ENCODE measurements at regions of chr6 and their contacts with region 1.

Region 1: DNA sequence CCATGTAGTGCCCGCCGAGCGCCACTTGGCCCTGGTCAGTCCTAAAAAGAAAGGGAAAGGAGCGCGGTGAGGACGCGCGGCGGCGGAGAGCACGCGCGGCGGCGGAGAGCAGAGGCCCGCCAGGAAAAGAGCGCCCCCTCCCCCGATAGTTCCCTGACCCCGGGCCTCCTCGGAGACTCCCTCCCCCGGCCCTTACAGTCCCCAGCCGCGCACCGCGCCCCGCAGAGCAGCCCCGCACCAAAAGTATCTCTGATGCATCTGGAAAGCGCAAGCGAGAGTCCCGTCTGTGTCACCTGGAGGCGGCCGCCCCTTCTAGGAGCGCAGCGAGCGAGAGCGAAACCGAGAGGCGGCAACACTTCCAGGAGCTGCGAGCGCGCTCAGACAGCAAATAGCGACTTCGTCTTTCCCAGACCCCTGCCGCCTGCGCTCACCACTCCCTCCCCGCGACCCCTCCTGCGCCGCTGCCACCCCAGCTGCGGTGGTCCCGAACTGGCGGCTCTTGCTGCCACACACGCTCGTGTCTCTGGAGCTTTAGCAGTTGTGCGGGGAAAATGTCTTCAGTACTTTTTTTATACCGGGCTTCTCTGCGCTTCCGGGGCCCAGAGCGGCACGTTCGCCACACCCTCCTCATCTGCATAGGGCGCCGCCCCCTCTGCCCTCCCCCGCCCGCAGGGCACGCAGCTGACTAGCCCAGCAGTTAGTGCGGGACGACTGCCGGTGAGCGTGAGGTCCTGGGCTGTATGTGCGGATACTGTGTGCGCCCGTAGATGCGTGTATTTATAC is at the start of gene TENT5A:
- H3K4me3 Mint-ChIP-seq: peak within 1 kb of the TSS; percentile 87
- H3K27ac Mint-ChIP-seq: peak within 1 kb of the TSS; percentile 98
- H3K4me1 Mint-ChIP-seq: peaks cover 50% of the 10 kb centered on the region
- H3K27me3 Mint-ChIP-seq: no peaks in the 10 kb centered on the region

Region 2: GRCh38 chr6:80106418-80107235 is 1645.7 kb before region 1 on chr6 and contains the start of gene BCKDHB:
- intact Hi-C with region 1: loop called (anchors 10 kb)
- H3K4me3 Mint-ChIP-seq: peak within 1 kb of the TSS; percentile 90
- H3K27ac Mint-ChIP-seq: peak within 1 kb of the TSS; percentile 80
- H3K4me1 Mint-ChIP-seq: peaks cover 11% of the 10 kb centered on the region
- H3K27me3 Mint-ChIP-seq: peaks cover 12% of the 10 kb centered on the region

Region 3: GRCh38 chr6:81734085-81734484 is 18.2 kb before region 1 on chr6:
- intact Hi-C with region 1: loop called (anchors 2 kb)
- H3K4me3 Mint-ChIP-seq: no peak overlapping the region
- H3K27ac Mint-ChIP-seq: no peak overlapping the region
- H3K4me1 Mint-ChIP-seq: peaks cover 12% of the 10 kb centered on the region
- H3K27me3 Mint-ChIP-seq: no peaks in the 10 kb centered on the region

Region 4: GRCh38 chr6:81962214-81962613 is 209.9 kb after region 1 on chr6:
- intact Hi-C with region 1: no loop called
- H3K4me3 Mint-ChIP-seq: no peak overlapping the region
- H3K27ac Mint-ChIP-seq: no peak overlapping the region
- H3K4me1 Mint-ChIP-seq: peaks cover 15% of the 10 kb centered on the region
- H3K27me3 Mint-ChIP-seq: no peaks in the 10 kb centered on the region

Region 5: GRCh38 chr6:81999826-82000225 is 247.5 kb after region 1 on chr6:
- intact Hi-C with region 1: loop called (anchors 5 kb)
- H3K4me3 Mint-ChIP-seq: no peak overlapping the region
- H3K27ac Mint-ChIP-seq: no peak overlapping the region
- H3K4me1 Mint-ChIP-seq: peaks cover 24% of the 10 kb centered on the region
- H3K27me3 Mint-ChIP-seq: no peaks in the 10 kb centered on the region

Region 6: GRCh38 chr6:83192871-83193746 is 1440.8 kb after region 1 on chr6 and contains the starts of genes PGM3 and RWDD2A:
- intact Hi-C with region 1: loop called (anchors 5 kb)
- H3K4me3 Mint-ChIP-seq: peak within 1 kb of the TSS; percentile 93
- H3K27ac Mint-ChIP-seq: peak within 1 kb of the TSS; percentile 92
- H3K4me1 Mint-ChIP-seq: peaks cover 15% of the 10 kb centered on the region
- H3K27me3 Mint-ChIP-seq: peaks cover 10% of the 10 kb centered on the region

Measured in dendritic cell treated with granulocyte-macrophage colony-stimulating factor and Interleukin-4, amounts not matched to agents 40 ng/mL and 50 ng/mL, for 4 days (primary cell).